HEK293 (cell line): ENCODE measurements at regions of chr5 and their contacts with region 1.

Region 1: DNA sequence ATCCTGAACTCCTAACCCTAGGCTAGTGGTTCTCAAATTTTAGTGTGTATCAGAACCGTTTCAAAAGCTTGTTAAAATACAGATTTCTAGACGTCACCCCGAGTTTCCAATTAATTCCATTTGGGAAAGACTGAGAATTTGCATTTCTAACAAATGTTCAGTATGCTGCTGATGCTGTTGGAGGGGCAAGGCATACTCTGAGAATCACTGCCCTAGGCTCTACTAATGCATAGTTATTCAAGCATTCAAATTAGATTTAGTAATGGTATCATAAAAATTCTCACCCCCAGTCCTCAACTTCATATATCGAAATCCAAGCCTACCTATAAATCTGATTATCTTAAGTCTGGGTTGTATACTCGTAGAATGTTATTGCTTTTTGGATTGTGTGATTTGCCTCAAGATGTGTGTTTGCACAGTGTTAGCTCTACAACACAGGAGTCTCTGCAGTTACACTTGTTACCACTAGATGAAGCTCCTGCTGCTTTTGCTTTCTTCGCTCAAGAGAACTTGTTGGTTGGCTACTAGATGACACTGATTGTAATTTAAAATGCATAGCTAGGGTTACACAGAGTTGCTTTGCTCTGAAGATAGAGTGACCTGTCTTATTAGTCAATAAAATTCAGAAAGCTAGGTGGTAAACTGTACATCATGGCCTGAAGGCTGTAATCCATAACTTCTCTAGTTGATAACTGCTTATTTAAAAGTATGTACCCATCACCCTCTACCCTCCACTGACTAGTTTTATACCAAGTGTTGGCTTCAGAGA is 7.5 kb upstream of the ERAP2 start:
- H3K4me3 ChIP-seq: no peak overlapping the region
- H3K27ac ChIP-seq: no peak overlapping the region
- H3K4me1 ChIP-seq: no peaks in the 10 kb centered on the region
- CTCF ChIP-seq: peak; percentile 65

Region 2: DNA sequence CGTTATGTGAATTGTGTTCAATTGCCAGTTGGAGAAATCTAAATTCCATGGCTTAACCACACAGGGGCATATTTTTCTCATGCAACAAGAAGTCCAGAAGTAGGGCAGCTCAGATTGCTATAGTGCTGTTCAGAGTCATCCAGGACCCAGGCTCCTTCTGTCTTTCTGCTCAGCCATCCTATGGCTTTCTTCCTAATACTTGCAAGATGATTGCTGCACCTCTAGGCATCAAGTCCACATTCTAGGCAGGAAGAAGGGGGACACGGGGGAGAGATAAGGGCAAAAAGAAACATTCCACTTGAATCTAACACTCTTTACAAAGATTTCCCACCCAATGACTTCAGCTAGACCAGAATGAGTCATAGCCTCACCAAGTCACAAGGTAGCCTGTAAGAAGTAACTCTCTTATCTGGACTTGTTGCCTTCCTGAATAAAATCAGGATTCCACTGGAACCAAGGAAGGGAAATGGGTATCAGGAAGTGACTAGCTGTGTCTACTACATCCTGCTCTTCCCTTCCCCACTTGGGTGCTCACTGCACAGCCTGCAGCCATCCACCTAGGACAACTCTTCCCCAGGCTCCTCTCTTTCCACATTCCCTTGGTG is 12.8 kb after region 1 on chr5:
- CTCF ChIA-PET with region 1: interaction called, 16 read pairs
- POLR2A ChIA-PET with region 1: no interaction called
- H3K4me3 ChIP-seq: no peak overlapping the region
- H3K27ac ChIP-seq: no peak overlapping the region
- H3K4me1 ChIP-seq: no peaks in the 10 kb centered on the region
- CTCF ChIP-seq: 0 out of 2 replicates have a peak, but pooled peaks have one; percentile 14

Region 3: GRCh38 chr5:96940586-96940985 is 71.8 kb after region 1 on chr5:
- CTCF ChIA-PET with region 1: interaction called, 12 read pairs
- POLR2A ChIA-PET with region 1: interaction called, 8 read pairs
- H3K4me3 ChIP-seq: no peak overlapping the region
- H3K27ac ChIP-seq: no peak overlapping the region
- H3K4me1 ChIP-seq: 0 out of 2 replicates have a peak, but pooled peaks cover 3% of the 10 kb centered on the region
- CTCF ChIP-seq: no peak

Region 4: GRCh38 chr5:97010606-97011005 is 141.8 kb after region 1 on chr5:
- CTCF ChIA-PET with region 1: interaction called, 10 read pairs
- POLR2A ChIA-PET with region 1: no interaction called
- H3K4me3 ChIP-seq: no peak overlapping the region
- H3K27ac ChIP-seq: no peak overlapping the region
- H3K4me1 ChIP-seq: 0 out of 2 replicates have a peak, but pooled peaks cover 4% of the 10 kb centered on the region
- CTCF ChIP-seq: no peak

Region 5: GRCh38 chr5:97142521-97143254 is 273.9 kb after region 1 on chr5 and contains the start of gene LIX1:
- CTCF ChIA-PET with region 1: interaction called, 44 read pairs
- POLR2A ChIA-PET with region 1: no interaction called
- H3K4me3 ChIP-seq: no peak within 1 kb of the TSS
- H3K27ac ChIP-seq: no peak within 1 kb of the TSS
- H3K4me1 ChIP-seq: peaks cover 11% of the 10 kb centered on the region
- CTCF ChIP-seq: peak; percentile 64; the same call in 1 of the 2 replicates

Region 6: GRCh38 chr5:97162045-97162444 is 293.3 kb after region 1 on chr5:
- CTCF ChIA-PET with region 1: interaction called, 97 read pairs
- POLR2A ChIA-PET with region 1: no interaction called
- H3K4me3 ChIP-seq: no peak overlapping the region
- H3K27ac ChIP-seq: no peak overlapping the region
- H3K4me1 ChIP-seq: no peaks in the 10 kb centered on the region
- CTCF ChIP-seq: 0 out of 2 replicates have a peak, but pooled peaks have one; percentile 60

Region 7: GRCh38 chr5:97183100-97183929 is 314.5 kb after region 1 on chr5 and contains the start of gene RIOK2:
- CTCF ChIA-PET with region 1: no interaction called
- POLR2A ChIA-PET with region 1: no interaction called
- H3K4me3 ChIP-seq: peak within 1 kb of the TSS; percentile 90
- H3K27ac ChIP-seq: peak within 1 kb of the TSS; percentile 87
- H3K4me1 ChIP-seq: peaks cover 2% of the 10 kb centered on the region
- CTCF ChIP-seq: no peak